ENCODE measurements at regions of chr5 and their contacts with region 1.

Region 1: DNA sequence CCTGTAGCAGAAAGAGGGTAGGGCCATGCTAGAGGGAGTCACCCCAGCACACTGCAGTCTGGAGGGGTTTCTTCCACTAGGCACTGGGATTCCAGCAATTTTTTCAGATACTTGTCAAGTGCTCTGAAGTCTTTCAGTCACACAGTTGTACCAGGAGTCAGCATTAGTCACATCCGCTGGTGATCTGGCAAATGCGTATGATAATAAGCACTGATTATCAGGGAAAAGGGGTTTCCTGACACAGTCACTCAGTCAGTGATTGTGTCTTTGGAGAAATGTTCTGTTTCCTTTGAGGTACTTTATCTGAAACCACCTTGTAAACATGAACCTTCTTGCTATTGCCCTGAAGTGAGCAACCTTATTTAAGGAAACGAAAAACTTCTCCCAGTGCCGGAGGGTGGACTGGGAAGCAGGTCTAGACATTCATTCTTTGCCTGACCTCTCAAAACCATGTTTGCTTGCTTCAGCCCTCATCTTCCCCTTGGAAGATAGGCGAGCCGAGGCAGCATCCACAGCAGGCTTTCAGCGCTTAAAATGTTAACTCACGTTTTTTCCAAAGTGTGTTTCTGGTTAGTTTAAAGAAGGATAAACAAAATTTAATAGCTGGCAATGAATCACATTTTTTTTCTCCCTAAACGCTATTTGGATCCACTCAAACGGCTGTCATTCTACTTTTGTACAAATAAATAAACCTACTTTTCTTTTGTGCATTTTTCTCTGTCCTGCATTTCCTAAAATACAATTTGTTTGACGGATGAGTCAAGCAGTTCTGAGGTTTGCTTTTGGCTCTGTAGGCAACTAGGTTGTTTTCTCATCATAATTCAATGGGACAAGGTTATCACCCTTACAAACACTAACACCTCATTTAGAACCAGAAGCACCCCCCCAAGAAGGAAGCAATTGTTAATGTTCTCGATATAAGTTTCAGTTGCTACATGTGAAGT is 77.7 kb downstream of the FOXD1 start:
- DNase-seq: peak; percentile 97
- H3K4me3 ChIP-seq: peak overlapping the region in 1 of 3 experiments; percentile 0
- H3K27ac ChIP-seq: peak overlapping the region; percentile 86
- H3K4me1 ChIP-seq: peaks cover 33% of the 10 kb centered on the region
- H3K27me3 ChIP-seq: no peaks in the 10 kb centered on the region
- CTCF ChIP-seq: no peak
- POLR2A ChIP-seq: peak; percentile 69

Region 2: DNA sequence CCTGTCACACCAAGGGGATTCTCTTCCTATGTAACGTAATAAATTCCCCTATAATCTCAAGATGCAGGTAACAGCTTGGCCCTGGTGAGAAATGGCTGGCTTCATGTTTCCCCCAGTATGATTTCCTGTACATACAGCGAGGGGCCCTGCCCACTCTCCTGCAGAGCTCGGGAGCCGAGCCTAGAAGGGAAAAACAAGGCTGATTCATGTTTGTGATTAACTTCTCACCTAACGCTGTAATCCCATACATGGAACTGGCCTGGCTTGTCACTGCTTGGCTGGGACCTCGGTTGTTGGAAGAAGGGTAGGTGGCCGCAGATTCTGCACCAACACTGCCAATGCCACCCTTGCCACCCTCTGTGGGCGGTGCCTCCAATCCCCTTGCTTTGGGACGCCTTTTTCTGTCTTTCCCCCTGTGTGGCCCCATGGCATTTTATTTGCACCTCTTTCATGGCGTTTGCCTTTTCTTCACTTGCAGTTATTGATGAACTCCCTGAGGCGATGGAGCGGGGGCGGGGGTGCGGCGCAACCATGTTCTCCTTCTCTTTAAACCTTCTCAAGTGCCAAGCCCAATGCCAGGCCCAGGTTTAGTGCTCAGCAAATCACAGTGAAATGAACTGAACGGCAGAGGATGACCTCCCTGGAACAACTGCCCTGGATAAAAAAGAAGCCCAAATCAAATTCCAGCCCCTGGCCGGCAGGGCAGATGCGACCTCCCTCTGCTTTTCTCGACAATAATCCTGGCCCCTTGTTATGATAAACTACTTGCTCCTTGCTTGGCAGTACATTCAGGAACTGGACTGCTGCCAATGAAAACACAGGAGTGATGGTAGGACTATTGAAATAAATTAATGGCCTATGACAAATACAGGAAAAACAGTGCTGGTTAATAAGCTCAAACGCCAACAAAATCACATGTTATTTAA is 89.8 kb before region 1 on chr5:
- CTCF ChIA-PET with region 1: no interaction called
- POLR2A ChIA-PET with region 1: no interaction called
- dilution Hi-C with region 1: no loop called
- intact Hi-C with region 1: loop called (anchors 1 kb)
- DNase-seq: peak; percentile 99
- H3K4me3 ChIP-seq: peak overlapping the region in 1 of 3 experiments; percentile 12
- H3K27ac ChIP-seq: peak overlapping the region; percentile 30
- H3K4me1 ChIP-seq: peaks cover 17% of the 10 kb centered on the region
- H3K27me3 ChIP-seq: peaks cover 30 to 40% of the 10 kb centered on the region in 2 experiments
- CTCF ChIP-seq: no peak
- POLR2A ChIP-seq: no peak

Region 3: DNA sequence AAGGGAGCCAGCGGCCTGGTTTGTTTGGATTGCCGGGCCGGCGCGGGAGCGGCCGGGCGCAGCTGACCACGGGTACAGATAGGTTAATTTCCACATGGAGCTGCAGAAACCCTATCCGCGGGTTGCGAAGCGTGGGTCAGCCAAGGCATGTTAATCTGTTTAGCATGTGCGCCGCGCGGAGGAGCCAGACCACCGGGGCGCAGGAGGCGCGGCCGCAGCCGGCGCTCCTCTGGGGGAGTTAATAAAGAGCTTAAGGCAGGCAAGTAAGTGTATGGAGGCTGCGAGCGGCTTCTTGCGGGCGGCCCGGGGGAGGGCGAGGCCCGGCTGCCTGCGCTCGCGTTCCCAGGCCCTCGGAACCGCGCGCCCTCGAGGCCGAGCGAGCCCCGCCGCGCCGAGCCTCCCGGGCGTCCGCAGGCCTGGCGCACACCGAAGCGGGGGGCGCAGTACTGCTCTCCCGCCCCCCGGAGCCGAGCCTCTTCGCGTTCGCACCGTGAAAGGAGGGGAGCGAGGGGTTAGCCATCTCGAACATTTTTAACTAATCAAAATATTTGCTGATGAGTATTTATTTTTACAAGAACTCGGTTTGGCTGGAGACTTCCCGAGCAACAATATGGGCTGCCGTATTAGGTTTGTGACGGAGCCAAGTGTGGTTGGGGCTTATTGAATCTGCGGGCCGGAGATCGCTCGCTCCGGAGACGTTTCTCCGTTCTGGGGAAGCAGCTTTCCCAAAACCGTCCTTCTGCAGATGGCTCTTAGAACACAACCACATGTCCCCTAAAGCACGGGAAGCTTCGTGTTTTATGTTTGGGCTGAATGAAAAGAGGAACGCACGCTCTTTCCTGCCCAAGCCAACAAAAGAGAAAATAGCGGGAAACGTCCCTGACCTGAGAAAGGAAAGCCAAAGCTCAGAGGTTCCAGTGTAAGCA is 48.8 kb after region 1 on chr5:
- CTCF ChIA-PET with region 1: no interaction called
- POLR2A ChIA-PET with region 1: no interaction called
- dilution Hi-C with region 1: no loop called
- intact Hi-C with region 1: no loop called
- DNase-seq: no peak
- H3K4me3 ChIP-seq: no peak overlapping the region
- H3K27ac ChIP-seq: no peak overlapping the region
- H3K4me1 ChIP-seq: no peaks in the 10 kb centered on the region
- H3K27me3 ChIP-seq: peaks cover 69 to 94% of the 10 kb centered on the region in 2 experiments
- CTCF ChIP-seq: no peak
- POLR2A ChIP-seq: no peak